Heart right ventricle (tissue), 16 donors: ENCODE measurements at regions of chr13 and their contacts with region 1.

Region 1: GRCh38 chr13:96294930-96295881 is 205.3 kb downstream of the HS6ST3 start:
- DNase-seq: no peak
- ATAC-seq: no peak
- H3K4me3 ChIP-seq: no peak overlapping the region
- H3K27ac ChIP-seq: no peak overlapping the region
- H3K4me1 ChIP-seq: no peaks in the 10 kb centered on the region
- H3K27me3 ChIP-seq: no peaks in the 10 kb centered on the region
- CTCF ChIP-seq: no peak

Region 2: GRCh38 chr13:96373597-96373996 is 78.4 kb after region 1 on chr13:
- intact Hi-C with region 1: no loop called
- DNase-seq: no peak
- ATAC-seq: no peak
- H3K4me3 ChIP-seq: no peak overlapping the region
- H3K27ac ChIP-seq: no peak overlapping the region
- H3K4me1 ChIP-seq: no peaks in the 10 kb centered on the region
- H3K27me3 ChIP-seq: no peaks in the 10 kb centered on the region
- CTCF ChIP-seq: no peak

Region 3: DNA sequence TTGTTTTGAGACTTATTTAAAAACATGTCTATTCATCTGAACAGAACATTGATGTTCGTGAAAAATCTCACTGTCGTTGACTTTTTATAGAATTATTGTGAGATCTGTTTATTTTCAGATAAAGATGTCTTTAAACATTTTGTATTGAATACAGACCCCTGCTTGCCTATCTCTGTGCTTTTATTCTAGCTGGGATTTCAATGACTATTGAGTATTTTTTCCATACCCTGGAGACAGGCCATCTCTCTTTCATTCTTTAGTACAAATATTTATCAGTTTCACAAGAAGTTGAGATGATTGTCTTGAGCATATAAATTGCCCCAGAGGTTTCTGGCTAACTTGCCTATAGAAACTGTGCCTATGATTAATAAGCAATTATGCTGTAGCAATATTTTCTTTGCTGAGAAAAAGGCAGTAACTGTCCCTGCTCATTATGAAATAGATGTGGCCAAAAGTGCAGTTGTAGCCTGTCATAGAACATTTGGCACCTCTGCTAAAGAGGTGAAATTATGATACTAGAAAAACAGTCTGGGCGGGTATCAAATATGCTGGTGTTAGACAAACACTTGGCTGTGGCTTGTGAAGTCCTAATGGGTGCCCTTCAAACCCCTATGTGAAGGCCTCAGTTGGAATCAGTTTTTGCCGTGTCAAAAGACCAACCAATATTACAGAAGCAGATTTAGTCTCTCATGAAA is 155.3 kb after region 1 on chr13:
- intact Hi-C with region 1: no loop called
- DNase-seq: no peak
- ATAC-seq: peak in 1 of 8 donors; percentile 51
- H3K4me3 ChIP-seq: no peak overlapping the region
- H3K27ac ChIP-seq: no peak overlapping the region
- H3K4me1 ChIP-seq: no peaks in the 10 kb centered on the region
- H3K27me3 ChIP-seq: no peaks in the 10 kb centered on the region
- CTCF ChIP-seq: no peak

Region 4: DNA sequence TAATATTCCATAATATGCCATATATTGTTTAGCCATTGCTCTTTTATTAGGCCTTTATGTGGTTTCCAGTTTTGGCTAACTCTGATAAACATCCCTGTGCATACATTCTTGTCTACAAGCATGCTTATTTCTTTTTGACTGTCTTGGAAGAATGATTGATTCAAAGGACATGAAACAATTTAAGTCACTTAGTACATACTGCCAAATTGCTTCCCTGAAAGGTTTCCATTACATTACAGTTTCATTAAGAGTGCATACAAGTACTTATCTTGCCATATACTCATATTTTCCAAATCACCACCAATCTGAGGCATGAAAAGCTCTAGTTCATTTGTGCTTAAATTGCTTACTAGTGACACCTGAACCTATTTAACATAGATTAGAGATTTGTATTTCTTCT is 585.2 kb after region 1 on chr13:
- intact Hi-C with region 1: loop called in 1 of 10 experiments (anchors 5 kb)
- DNase-seq: no peak
- ATAC-seq: no peak
- H3K4me3 ChIP-seq: no peak overlapping the region
- H3K27ac ChIP-seq: no peak overlapping the region
- H3K4me1 ChIP-seq: no peaks in the 10 kb centered on the region
- H3K27me3 ChIP-seq: no peaks in the 10 kb centered on the region
- CTCF ChIP-seq: no peak